ENCODE measurements at regions of chr20 and their contacts with region 1.

Region 1: GRCh38 chr20:8043687-8044282 is 24.2 kb upstream of the TMX4 start:
- DNase-seq: peak; percentile 56
- H3K4me3 ChIP-seq: no peak overlapping the region
- H3K27ac ChIP-seq: no peak overlapping the region
- H3K4me1 ChIP-seq: peaks cover 24% of the 10 kb centered on the region
- H3K27me3 ChIP-seq: no peaks in the 10 kb centered on the region
- CTCF ChIP-seq: peak; percentile 38 to 50
- POLR2A ChIP-seq: no peak

Region 2: GRCh38 chr20:8033151-8033841 is 10.5 kb before region 1 on chr20:
- CTCF ChIA-PET with region 1: interaction called, 24 read pairs
- POLR2A ChIA-PET with region 1: no interaction called
- dilution Hi-C with region 1: no loop called
- intact Hi-C with region 1: no loop called
- DNase-seq: no peak
- H3K4me3 ChIP-seq: no peak overlapping the region
- H3K27ac ChIP-seq: no peak overlapping the region
- H3K4me1 ChIP-seq: no peaks in the 10 kb centered on the region
- H3K27me3 ChIP-seq: no peaks in the 10 kb centered on the region
- CTCF ChIP-seq: no peak
- POLR2A ChIP-seq: no peak

Region 3: DNA sequence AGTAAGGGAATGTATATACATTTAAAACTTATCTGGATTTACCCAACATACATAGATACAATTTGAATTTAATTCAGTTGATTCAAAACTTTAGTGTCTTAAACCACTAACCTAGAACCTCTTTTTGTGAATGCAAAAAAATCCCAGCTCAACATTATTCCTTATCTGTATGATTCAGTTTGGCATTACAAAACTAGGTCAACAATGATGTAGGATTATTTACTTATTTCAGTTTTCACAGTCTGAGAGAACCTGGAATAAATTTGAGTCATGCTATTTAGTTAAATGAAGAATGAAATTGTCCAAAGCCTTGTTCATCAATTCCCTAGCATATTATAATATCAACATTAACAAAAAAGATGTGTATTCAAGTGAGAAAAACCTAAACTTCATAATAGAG is 80.9 kb after region 1 on chr20:
- CTCF ChIA-PET with region 1: interaction called, 128 read pairs
- POLR2A ChIA-PET with region 1: no interaction called
- dilution Hi-C with region 1: no loop called
- intact Hi-C with region 1: no loop called
- DNase-seq: no peak
- H3K4me3 ChIP-seq: no peak overlapping the region
- H3K27ac ChIP-seq: no peak overlapping the region
- H3K4me1 ChIP-seq: no peaks in the 10 kb centered on the region
- H3K27me3 ChIP-seq: no peaks in the 10 kb centered on the region
- CTCF ChIP-seq: no peak
- POLR2A ChIP-seq: no peak

Region 4: GRCh38 chr20:8454137-8454712 is 410.4 kb after region 1 on chr20:
- CTCF ChIA-PET with region 1: interaction called, 5 read pairs
- POLR2A ChIA-PET with region 1: no interaction called
- dilution Hi-C with region 1: no loop called
- intact Hi-C with region 1: loop called (anchors 5 kb)
- DNase-seq: peak; percentile 80
- H3K4me3 ChIP-seq: no peak overlapping the region
- H3K27ac ChIP-seq: no peak overlapping the region
- H3K4me1 ChIP-seq: no peaks in the 10 kb centered on the region
- H3K27me3 ChIP-seq: no peaks in the 10 kb centered on the region
- CTCF ChIP-seq: peak; percentile 40 to 42
- POLR2A ChIP-seq: no peak

Measured in endothelial cell of umbilical vein (primary cell).